ENCODE measurements at regions of chr14 and their contacts with region 1.

Region 1: GRCh38 chr14:63543000-63543825 is at the start of gene PPP2R5E:
- DNase-seq: peak; percentile 99
- H3K4me3 ChIP-seq: peak within 1 kb of the TSS; percentile 84 to 97 (median 88)
- H3K27ac ChIP-seq: peak within 1 kb of the TSS; percentile 88 to 92
- H3K4me1 ChIP-seq: no peaks in the 10 kb centered on the region
- H3K27me3 ChIP-seq: no peaks in the 10 kb centered on the region
- CTCF ChIP-seq: no peak
- POLR2A ChIP-seq: peak; percentile 61
- total RNA-seq, gene PPP2R5E: 23.0 to 29.9 (median 23.6) TPM

Region 2: GRCh38 chr14:63392236-63392635 is 151.0 kb before region 1 on chr14:
- intact Hi-C with region 1: loop called (anchors 5 kb)
- DNase-seq: no peak
- H3K4me3 ChIP-seq: no peak overlapping the region
- H3K27ac ChIP-seq: no peak overlapping the region
- H3K4me1 ChIP-seq: no peaks in the 10 kb centered on the region
- H3K27me3 ChIP-seq: no peaks in the 10 kb centered on the region
- CTCF ChIP-seq: no peak
- POLR2A ChIP-seq: no peak

Measured in breast epithelium (tissue), 4 donors.